Stomach (tissue), 19 donors: ENCODE measurements at regions of chr11 and their contacts with region 1.

Region 1: GRCh38 chr11:96054870-96055705 is 131.2 kb upstream of the MTMR2 start:
- DNase-seq: peak in 1 of 2 donors; percentile 70
- H3K4me3 ChIP-seq: no peak overlapping the region
- H3K27ac ChIP-seq: peak overlapping the region in 1 of 5 donors; percentile 2
- H3K4me1 ChIP-seq: peaks cover 6 to 54% (median 22%) of the 10 kb centered on the region in 4 donors
- H3K27me3 ChIP-seq: no peaks in the 10 kb centered on the region
- CTCF ChIP-seq: peak in 5 of 7 experiments; percentile 49 to 70 (median 57)
- EP300 ChIP-seq: no peak
- POLR2A ChIP-seq: no peak

Region 2: DNA sequence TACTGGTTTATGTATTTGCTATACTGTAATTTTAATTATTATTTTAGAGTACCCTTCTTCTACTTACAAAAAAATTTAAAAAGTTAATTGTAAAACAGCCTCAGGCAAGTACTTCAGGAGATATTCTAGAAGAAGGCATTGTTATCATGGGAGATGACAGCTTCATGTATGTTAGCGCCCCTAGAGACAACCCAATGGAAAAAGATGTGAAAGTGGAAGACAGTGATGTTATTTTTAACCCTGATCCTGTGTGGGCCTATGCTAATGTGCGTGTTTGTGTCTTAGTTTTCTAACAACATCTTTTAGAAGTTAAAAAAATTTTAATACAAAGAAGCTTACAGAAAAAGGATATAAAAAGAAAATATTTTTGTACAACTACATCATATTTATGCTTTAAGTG is 470.5 kb before region 1 on chr11:
- intact Hi-C with region 1: no loop called
- DNase-seq: no peak
- H3K4me3 ChIP-seq: no peak overlapping the region
- H3K27ac ChIP-seq: no peak overlapping the region
- H3K4me1 ChIP-seq: no peaks in the 10 kb centered on the region
- H3K27me3 ChIP-seq: no peaks in the 10 kb centered on the region
- CTCF ChIP-seq: no peak
- EP300 ChIP-seq: no peak
- POLR2A ChIP-seq: no peak

Region 3: GRCh38 chr11:96342961-96343711 is 288.0 kb after region 1 on chr11 and contains the start of gene MAML2:
- intact Hi-C with region 1: loop called (anchors 5 kb)
- DNase-seq: peak; percentile 94 to 97
- H3K4me3 ChIP-seq: peak within 1 kb of the TSS; percentile 61 to 79 (median 66)
- H3K27ac ChIP-seq: peak within 1 kb of the TSS; percentile 77 to 90 (median 86)
- H3K4me1 ChIP-seq: peaks cover 22 to 47% (median 39%) of the 10 kb centered on the region in 4 donors
- H3K27me3 ChIP-seq: no peaks in the 10 kb centered on the region
- CTCF ChIP-seq: peak in 5 of 7 experiments; percentile 71 to 97 (median 91)
- EP300 ChIP-seq: no peak
- POLR2A ChIP-seq: no peak
- total RNA-seq, gene MAML2: 7.8 to 22.8 (median 17.4) TPM